ENCODE measurements at regions of chrX and their contacts with region 1.

Region 1: DNA sequence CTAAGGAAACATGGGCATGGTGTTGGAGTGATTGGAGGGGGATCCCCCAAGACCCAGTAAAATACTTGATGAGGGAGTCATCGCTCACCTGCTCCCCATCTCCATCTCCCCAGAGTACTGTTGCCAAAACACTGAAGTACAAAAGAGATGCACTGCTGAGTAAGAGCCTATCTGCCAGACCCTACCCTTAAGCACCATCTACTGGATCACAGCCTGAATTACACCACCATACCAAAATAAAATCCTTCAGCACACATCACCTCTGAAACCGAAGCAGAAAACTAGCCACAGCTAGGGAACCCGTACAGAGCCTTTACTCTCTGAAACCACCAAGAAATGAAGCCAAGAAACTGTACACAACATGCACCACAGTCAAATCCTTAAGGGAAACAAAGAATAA is 466.3 kb upstream of the ACTRT1 start:
- DNase-seq: peak; percentile 51
- H3K4me3 ChIP-seq: no peak overlapping the region
- H3K27ac ChIP-seq: no peak overlapping the region
- H3K4me1 ChIP-seq: no peaks in the 10 kb centered on the region
- H3K27me3 ChIP-seq: no peaks in the 10 kb centered on the region
- CTCF ChIP-seq: peak; percentile 65

Region 2: GRCh38 chrX:128781493-128781892 is 263.0 kb after region 1 on chrX:
- CTCF ChIA-PET with region 1: no interaction called
- POLR2A ChIA-PET with region 1: no interaction called
- intact Hi-C with region 1: loop called (anchors 5 kb)
- DNase-seq: peak; percentile 81
- H3K4me3 ChIP-seq: no peak overlapping the region
- H3K27ac ChIP-seq: peak overlapping the region; percentile 55
- H3K4me1 ChIP-seq: peaks cover 7% of the 10 kb centered on the region
- H3K27me3 ChIP-seq: no peaks in the 10 kb centered on the region
- CTCF ChIP-seq: peak; percentile 62

Region 3: DNA sequence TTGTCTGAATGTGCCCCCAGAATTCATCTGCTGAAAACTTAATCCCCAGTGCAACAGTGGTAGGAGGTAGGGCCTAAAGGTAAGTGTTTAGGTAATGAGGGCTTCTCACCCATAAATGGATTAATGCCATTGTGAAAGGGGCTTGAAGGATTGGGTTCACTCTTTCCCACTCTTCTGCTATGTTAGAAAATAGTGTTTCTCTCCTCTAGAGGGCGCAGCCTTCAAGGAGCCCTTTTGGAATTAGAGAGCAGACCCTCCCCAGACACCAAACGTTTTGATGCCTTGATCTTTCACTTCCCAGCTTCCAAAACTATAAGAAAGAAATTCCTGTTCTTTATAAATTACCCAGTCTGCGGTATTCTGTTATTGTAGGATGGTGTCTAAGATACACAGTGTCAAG is 298.4 kb after region 1 on chrX:
- CTCF ChIA-PET with region 1: no interaction called
- POLR2A ChIA-PET with region 1: no interaction called
- intact Hi-C with region 1: no loop called
- DNase-seq: peak; percentile 37
- H3K4me3 ChIP-seq: no peak overlapping the region
- H3K27ac ChIP-seq: no peak overlapping the region
- H3K4me1 ChIP-seq: no peaks in the 10 kb centered on the region
- H3K27me3 ChIP-seq: no peaks in the 10 kb centered on the region
- CTCF ChIP-seq: peak; percentile 67

Measured in A673 (cell line).